PC-9 (cell line): ENCODE measurements at regions of chr22 and their contacts with region 1.

Region 1: DNA sequence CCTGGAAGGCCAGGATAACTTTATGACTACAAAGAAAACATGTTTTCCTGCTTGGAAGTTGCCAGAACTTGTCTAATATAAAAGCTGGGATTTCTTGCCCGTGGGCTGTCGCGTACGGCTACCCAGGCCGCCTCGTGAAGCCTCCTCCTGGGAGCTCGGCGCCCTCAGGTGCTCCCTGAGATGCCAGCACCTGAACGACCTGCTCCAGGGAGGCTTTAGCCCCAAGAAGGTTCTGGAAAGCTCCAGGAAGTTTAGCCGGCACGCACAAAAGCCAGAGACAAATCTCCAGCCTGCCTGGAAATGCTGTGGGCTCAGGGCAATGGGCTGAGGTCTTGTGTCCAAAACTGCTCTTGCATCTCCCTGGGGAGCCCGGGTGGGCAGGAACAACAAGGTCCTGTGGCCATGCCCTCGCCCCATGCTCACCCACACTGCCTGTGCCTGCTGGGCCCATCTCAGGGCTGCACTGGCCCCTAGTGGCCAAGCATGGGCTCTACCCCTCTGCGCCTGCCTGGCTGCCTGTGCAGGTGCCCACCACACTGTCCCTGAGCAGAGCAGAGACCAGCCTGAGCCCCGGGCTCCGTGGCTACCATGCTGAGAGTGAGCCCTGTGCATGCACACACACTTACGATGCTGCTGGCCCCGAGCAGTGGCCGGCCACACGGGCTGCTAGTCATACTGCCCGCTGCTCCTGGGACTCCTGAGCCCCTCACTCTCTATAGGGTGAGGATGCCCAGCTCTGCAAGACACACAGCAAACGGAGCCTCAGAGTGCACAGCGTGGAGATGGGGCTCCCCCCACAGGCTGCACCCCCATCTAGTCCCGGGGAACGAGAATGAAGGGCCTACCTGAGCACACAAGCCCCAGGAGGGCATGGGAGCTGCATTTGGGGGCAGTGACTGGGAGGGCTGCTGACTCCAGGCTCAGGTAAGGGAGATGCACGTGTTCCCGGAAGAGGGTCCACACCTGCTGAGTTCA is 4.9 kb upstream of the CELSR1 start:
- DNase-seq: peak; percentile 52 to 80
- H3K4me3 ChIP-seq: no peak overlapping the region
- H3K27ac ChIP-seq: no peak overlapping the region
- H3K4me1 ChIP-seq: peaks cover 45% of the 10 kb centered on the region
- H3K27me3 ChIP-seq: no peaks in the 10 kb centered on the region
- CTCF ChIP-seq: peak; percentile 97

Region 2: GRCh38 chr22:46122511-46122971 is 419.8 kb before region 1 on chr22:
- CTCF ChIA-PET with region 1: no interaction called
- POLR2A ChIA-PET with region 1: no interaction called
- intact Hi-C with region 1: loop called (anchors 5 kb)
- DNase-seq: peak in 1 of 2 experiments; percentile 65
- H3K4me3 ChIP-seq: no peak overlapping the region
- H3K27ac ChIP-seq: no peak overlapping the region
- H3K4me1 ChIP-seq: no peaks in the 10 kb centered on the region
- H3K27me3 ChIP-seq: no peaks in the 10 kb centered on the region
- CTCF ChIP-seq: peak; percentile 99

Region 3: DNA sequence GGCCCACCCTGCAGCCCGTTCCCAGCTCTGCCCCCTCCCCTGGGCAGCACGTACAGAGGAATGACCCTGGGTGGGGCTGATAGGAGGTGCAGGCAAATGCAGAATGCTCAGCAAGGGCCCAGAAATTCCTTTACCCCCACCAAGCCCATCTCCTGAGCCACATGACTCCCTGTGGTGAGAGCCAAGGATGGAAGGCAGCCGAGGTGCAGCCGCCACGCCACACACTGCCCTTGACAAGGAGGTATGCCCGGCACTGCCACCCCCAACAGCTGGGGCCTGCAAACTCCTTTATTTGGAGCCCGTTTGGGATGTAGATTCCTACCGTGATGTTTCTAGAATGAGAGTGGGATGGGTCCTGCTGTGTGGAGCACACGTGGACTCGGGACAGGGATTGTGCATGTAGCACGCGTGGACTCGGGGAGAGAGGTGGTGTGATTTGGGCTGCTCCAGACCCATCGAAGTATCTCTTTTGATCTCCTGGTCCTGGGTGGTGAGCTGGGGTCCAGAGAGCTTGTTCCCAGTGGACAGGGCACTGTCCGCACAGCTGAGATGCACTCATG is 232.7 kb before region 1 on chr22:
- CTCF ChIA-PET with region 1: interaction called, 13 read pairs
- POLR2A ChIA-PET with region 1: no interaction called
- intact Hi-C with region 1: no loop called
- DNase-seq: no peak
- H3K4me3 ChIP-seq: no peak overlapping the region
- H3K27ac ChIP-seq: no peak overlapping the region
- H3K4me1 ChIP-seq: no peaks in the 10 kb centered on the region
- H3K27me3 ChIP-seq: no peaks in the 10 kb centered on the region
- CTCF ChIP-seq: no peak

Region 4: DNA sequence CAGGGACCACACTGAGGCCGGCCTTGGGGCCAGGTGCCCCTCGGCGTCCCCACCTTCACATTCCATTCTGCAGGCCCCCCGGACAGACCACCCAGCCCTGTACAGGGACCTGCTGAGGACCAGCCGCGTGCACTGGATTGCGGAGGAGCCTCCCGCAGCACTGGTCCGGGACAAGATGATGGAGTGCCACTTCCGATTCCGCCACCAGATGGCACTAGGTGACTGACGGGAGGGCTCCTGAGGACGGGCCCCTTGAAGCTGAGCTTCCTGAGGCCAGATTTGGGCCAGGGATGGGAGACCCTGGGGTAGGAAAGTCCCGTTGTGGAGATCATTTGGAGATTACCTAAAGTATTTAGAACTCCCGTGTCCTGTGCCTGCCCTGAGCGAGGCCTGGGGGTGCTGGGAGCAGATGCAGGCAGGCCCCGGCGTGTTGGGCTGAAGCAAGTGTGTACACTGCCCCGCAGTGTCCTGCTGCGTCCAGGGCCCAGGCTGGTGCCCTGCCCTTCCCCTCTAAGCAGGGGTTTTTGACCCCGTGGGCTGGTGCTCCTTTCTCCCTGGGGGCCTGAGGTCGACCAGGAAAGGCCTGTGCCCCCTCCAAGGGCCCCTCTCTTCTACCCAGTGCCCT is 186.8 kb before region 1 on chr22:
- CTCF ChIA-PET with region 1: interaction called, 3 read pairs
- POLR2A ChIA-PET with region 1: no interaction called
- intact Hi-C with region 1: loop called (anchors 1 kb)
- DNase-seq: peak; percentile 49 to 69
- H3K4me3 ChIP-seq: no peak overlapping the region
- H3K27ac ChIP-seq: no peak overlapping the region
- H3K4me1 ChIP-seq: 0 out of 2 replicates have a peak, but pooled peaks cover 3% of the 10 kb centered on the region
- H3K27me3 ChIP-seq: no peaks in the 10 kb centered on the region
- CTCF ChIP-seq: peak; percentile 95

Region 5: GRCh38 chr22:46377566-46378425 is 164.5 kb before region 1 on chr22:
- CTCF ChIA-PET with region 1: no interaction called
- POLR2A ChIA-PET with region 1: no interaction called
- intact Hi-C with region 1: loop called (anchors 1 kb)
- DNase-seq: peak; percentile 94 to 96
- H3K4me3 ChIP-seq: peak overlapping the region; percentile 39; the same call in 1 of the 2 replicates
- H3K27ac ChIP-seq: peak overlapping the region; percentile 95
- H3K4me1 ChIP-seq: peaks cover 67% of the 10 kb centered on the region
- H3K27me3 ChIP-seq: no peaks in the 10 kb centered on the region
- CTCF ChIP-seq: no peak

Region 6: DNA sequence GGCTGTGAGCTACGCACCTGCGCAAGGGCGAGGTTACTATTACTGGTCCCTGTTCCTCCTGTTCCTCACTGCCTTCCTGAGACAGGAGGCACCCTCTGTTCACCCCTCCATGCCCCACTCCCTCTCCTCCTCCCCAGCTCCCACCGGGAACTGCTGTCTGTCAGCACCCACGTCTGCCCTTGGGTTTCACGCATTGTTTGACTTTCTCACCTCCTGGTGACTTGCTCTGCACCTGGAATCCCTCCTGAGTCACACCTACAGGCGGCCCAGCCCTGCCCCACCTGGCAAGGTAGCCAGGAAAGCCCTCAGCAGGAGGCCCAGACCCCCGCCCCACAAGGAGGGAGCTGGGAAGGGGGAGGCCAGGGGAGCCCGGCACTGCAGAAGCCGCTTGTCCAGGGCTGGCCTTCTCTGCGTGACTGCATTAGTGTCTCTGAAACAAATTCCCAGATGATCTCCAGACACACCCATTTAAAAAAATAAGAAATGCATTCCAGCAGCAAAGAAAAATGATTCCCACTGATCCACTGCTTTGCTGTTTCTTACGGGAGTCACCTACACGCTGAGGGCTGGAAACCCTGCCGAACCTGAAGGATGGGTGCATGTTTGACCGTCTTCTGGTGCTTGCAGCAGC is 91.3 kb before region 1 on chr22:
- CTCF ChIA-PET with region 1: no interaction called
- POLR2A ChIA-PET with region 1: no interaction called
- intact Hi-C with region 1: loop called (anchors 1 kb)
- DNase-seq: peak; percentile 92 to 95
- H3K4me3 ChIP-seq: peak overlapping the region; percentile 1; the same call in 1 of the 2 replicates
- H3K27ac ChIP-seq: peak overlapping the region; percentile 96
- H3K4me1 ChIP-seq: peaks cover 83% of the 10 kb centered on the region
- H3K27me3 ChIP-seq: no peaks in the 10 kb centered on the region
- CTCF ChIP-seq: no peak